CD14-positive monocyte (primary cell): ENCODE measurements at regions of chr4 and their contacts with region 1.

Region 1: GRCh38 chr4:7719354-7720174 is 220.1 kb downstream of the AFAP1 start:
- DNase-seq: peak; percentile 14 to 41 (median 32)
- H3K4me3 ChIP-seq: no peak overlapping the region
- H3K4me3 Mint-ChIP-seq: no peak overlapping the region
- H3K27ac ChIP-seq: no peak overlapping the region
- H3K27ac Mint-ChIP-seq: no peak overlapping the region
- H3K4me1 ChIP-seq: peaks cover 0 to 5% of the 10 kb centered on the region in 2 donors
- H3K4me1 Mint-ChIP-seq: peaks cover 14% of the 10 kb centered on the region
- H3K27me3 ChIP-seq: peaks cover 0 to 15% of the 10 kb centered on the region in 2 donors
- H3K27me3 Mint-ChIP-seq: peaks cover 7 to 25% (median 21%) of the 10 kb centered on the region in 3 donors
- CTCF ChIP-seq: peak; percentile 91

Region 2: DNA sequence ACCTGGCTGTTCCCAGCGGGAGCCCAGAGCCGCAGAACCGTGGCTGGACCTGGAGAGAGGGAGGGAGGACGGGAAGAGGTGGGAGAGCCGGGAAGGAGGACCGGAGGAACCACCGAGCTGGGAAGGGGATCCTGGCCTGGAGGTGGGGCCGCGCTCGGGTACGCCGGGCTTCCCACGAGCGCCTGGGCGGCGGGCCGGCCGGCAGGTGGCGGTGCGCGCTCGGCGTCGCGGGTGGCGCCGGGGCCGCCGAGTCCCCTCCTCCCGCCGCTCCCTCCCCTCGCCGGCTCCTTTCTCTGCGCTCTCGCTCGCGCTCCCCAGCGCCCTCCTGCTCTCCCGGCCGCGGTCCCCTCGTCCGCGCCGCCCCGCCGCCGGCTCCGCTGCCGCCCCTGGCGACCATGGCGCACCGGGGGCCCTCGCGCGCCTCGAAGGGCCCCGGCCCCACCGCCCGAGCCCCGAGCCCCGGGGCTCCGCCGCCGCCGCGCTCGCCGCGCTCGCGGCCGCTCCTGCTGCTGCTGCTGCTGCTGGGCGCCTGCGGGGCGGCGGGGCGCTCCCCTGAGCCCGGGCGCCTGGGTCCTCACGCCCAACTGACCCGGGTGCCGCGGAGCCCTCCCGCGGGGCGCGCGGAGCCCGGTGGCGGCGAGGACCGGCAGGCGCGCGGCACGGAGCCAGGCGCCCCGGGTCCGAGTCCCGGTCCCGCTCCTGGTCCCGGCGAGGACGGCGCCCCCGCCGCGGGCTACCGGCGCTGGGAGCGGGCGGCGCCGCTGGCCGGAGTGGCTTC is 527.1 kb before region 1 on chr4 and contains the start of gene SORCS2:
- intact Hi-C with region 1: loop called (anchors 2 to 10 kb)
- DNase-seq: no peak
- H3K4me3 ChIP-seq: no peak within 1 kb of the TSS
- H3K4me3 Mint-ChIP-seq: peak within 1 kb of the TSS in 1 of 2 donors; percentile 75
- H3K27ac ChIP-seq: no peak within 1 kb of the TSS
- H3K27ac Mint-ChIP-seq: no peak within 1 kb of the TSS
- H3K4me1 ChIP-seq: no peaks in the 10 kb centered on the region
- H3K4me1 Mint-ChIP-seq: no peaks in the 10 kb centered on the region
- H3K27me3 ChIP-seq: peaks cover 12 to 36% of the 10 kb centered on the region in 2 donors
- H3K27me3 Mint-ChIP-seq: peaks cover 37 to 67% (median 49%) of the 10 kb centered on the region in 3 donors
- CTCF ChIP-seq: peak; percentile 46
- polyA plus RNA-seq, gene SORCS2: 0.46 to 0.55 TPM in 2 of 3 donors, not detected in the other

Region 3: DNA sequence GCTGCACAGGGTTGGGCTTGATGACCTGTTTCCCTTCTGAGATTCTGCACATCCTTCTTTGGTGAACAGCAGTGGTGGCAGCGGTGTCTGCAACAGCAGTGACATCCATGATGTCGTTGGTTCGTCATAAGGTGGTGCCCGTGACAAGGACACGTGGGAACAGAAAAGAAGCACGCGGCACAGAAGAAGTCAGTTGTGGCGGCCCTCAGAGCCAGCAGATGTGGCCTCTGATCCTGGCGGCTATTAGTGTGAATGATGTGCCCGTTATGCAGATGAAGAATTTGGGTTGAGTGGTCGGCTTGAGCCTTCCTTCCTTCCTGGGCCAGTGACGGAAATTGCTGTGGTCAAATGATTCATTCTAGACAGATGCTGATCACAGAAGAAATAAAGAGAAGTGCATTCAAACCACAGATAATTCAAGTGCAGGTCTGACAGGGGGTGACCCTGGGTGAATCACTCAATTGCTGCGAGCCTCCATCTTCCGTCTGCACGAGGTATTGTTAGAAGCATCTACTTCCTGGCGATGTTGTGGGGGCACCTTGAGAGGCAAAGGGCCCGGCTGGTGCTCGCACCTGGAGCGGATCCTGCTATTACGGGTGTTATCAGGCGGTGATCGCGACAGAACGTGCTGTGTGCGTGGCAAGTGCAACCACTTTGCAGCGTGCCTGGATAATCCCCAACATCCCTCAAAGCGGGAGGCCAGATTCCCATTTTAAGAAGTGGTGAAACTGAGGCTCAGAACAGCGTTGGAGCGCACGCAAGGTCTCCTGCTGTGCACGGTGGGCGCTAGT is 69.6 kb before region 1 on chr4:
- intact Hi-C with region 1: no loop called
- DNase-seq: peak; percentile 96 to 97 (median 96)
- H3K4me3 ChIP-seq: peak overlapping the region in 1 of 3 experiments; percentile 54
- H3K4me3 Mint-ChIP-seq: peak overlapping the region; percentile 64 to 72
- H3K27ac ChIP-seq: peak overlapping the region; percentile 84 to 92
- H3K27ac Mint-ChIP-seq: peak overlapping the region; percentile 96 to 100 (median 99)
- H3K4me1 ChIP-seq: peaks cover 96 to 99% of the 10 kb centered on the region in 2 donors
- H3K4me1 Mint-ChIP-seq: peaks cover 96% of the 10 kb centered on the region
- H3K27me3 ChIP-seq: no peaks in the 10 kb centered on the region
- H3K27me3 Mint-ChIP-seq: peaks cover 6 to 42% (median 20%) of the 10 kb centered on the region in 3 donors
- CTCF ChIP-seq: no peak